GM13976 (cell line): ENCODE measurements at regions of chr3 and their contacts with region 1.

Region 1: GRCh38 chr3:187164885-187165543 is 25.7 kb upstream of the RPL39L start:
- DNase-seq: peak; percentile 45
- CTCF ChIP-seq: peak; percentile 42

Region 2: GRCh38 chr3:186849374-186849975 is 315.5 kb before region 1 on chr3:
- in situ Hi-C with region 1: loop called (anchors 10 kb)
- DNase-seq: peak; percentile 73
- CTCF ChIP-seq: peak; percentile 53

Region 3: DNA sequence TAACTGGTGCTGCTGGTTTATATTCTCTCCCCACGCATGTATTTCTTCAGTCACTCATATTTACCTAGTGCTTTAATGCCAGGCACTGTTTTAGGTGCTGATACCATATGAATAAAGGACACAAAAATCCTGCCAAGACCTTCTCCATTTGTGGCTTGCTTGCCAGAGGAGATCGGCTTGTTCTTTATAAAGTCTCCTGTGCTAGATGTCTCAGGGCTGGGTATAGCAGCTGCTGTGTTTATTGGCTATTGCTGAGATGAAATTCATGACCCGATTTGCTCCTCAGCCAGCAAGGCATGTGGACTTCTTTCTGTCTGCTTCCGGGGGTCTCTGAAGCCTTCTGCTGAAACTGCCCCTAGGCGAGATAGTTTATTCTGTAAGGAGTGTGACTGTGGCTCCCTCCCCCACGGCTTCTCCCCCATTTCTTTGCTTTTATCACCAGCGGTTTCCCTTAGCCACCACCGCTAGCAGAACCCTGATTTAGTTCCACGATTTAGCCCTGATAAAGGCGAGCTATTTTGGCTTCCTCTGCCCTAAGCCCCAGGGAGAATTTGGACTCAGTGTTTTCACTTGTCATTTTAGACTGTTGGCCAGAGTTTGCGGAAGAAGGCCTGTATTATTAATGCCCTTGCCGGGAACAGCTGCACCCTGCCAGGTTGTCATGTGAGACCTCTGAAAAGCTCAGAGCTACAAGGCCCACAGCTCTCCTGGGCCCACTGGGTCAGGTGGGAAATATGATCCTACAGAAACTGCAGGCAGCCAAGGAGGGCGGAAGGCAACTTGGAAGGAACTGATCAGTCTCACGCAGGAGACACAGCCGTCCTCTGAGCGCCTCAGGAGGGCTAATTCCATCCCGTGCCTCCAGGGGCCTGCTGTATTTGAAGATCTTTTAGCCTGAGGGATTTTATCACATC is 187.9 kb before region 1 on chr3:
- in situ Hi-C with region 1: no loop called
- DNase-seq: no peak
- CTCF ChIP-seq: no peak